Activated B cell treated with CpG ODN at 0.5 μM for 24 hours (primary cell): ENCODE measurements at regions of chr7 and their contacts with region 1.

Region 1: DNA sequence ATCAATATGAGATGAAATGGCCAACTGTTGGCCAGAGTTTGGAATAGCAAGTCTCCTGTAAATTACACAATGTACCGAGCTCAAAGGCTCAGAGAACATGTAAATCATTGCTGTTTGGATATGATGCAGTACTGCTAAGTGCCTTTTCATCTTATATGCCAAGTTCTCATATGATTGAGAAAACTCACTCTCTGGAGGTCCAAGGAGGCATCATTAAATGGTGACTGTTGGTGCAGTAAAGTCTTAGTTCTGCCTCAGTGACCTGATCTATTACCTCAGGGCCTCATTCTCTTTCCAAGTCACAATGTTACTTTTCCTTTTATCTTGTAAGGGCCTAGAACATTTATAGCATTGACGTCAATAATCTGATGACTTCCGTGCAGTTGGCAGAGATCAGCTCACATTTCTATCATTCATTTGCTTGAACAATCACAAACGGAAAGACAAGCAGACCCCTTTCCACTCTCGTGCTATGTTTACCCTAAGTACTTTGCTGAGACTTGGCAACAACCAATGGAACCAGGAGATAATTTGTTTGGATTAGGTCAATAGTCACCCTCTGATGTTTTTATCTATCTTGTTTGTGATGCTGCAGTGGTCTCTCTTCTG is 32.6 kb upstream of the PDK4 start:
- DNase-seq: no peak
- ATAC-seq: no peak
- H3K4me3 Mint-ChIP-seq: no peak overlapping the region
- H3K27ac Mint-ChIP-seq: no peak overlapping the region
- H3K4me1 Mint-ChIP-seq: no peaks in the 10 kb centered on the region
- H3K27me3 Mint-ChIP-seq: peaks cover 3% of the 10 kb centered on the region
- CTCF ChIP-seq: no peak

Region 2: DNA sequence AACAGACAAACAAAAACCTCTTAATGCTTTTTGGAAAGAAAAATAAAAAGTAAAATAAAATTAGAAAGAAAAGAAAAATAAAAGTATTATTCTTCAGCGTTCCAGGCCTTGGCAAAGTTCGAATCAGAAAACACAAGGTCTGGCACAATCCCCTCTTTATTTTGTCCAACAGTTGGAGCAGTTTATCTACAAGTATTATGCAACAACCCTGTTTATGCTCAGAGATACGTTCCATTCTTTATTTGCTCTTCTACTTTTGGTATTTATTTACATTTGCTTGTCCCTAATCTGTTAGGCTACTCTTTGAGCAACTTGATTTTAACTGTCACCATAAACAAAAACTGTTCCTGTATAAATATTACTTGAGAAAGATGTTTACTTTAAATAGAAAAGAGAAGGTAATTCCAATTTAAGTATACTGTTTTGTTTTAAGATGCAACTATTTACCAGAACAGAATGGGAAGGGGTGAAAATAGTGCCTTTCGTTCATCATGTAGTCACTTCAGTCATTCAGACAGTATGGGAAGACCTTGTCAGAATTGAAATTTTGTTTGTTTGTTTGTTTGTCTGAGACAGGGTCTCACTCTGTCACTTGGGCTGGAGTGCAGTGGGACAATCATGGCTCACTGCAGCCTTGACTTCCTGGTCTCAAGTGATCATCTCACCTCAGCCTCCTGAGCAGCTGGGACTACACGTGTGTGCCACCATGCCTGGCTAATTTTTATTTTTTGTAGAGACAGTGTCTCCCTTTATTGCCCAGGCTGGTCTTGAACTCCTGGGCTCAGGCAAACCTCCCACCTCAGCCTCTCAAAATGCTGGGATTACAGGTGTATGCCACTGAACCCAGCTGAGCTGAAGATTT is 38.3 kb before region 1 on chr7:
- CTCF ChIA-PET with region 1: no interaction called
- POLR2A ChIA-PET with region 1: no interaction called
- intact Hi-C with region 1: no loop called
- DNase-seq: no peak
- ATAC-seq: no peak
- H3K4me3 Mint-ChIP-seq: no peak overlapping the region
- H3K27ac Mint-ChIP-seq: no peak overlapping the region
- H3K4me1 Mint-ChIP-seq: peaks cover 22% of the 10 kb centered on the region
- H3K27me3 Mint-ChIP-seq: no peaks in the 10 kb centered on the region
- CTCF ChIP-seq: no peak

Region 3: DNA sequence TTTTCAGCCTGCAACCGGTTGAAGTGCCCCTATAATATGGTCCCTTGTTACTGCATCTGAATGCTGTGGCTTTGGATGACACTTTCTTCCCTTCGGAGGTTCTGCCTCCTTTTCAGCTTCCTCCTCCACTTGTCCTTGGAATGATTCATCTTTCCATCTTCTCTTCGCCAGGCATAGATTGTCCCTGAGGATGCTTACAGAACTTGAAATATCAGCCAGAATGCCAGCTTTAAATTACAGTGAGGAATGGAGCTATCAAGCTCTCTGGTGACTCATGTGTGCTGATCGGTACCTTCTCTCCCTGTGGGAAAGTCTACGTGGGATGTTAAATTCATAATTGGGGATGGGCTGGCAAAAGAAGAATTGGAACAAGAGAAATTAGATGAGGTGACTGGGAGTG is 13.2 kb after region 1 on chr7:
- CTCF ChIA-PET with region 1: no interaction called
- POLR2A ChIA-PET with region 1: no interaction called
- intact Hi-C with region 1: loop called (anchors 2 kb)
- DNase-seq: no peak
- ATAC-seq: no peak
- H3K4me3 Mint-ChIP-seq: no peak overlapping the region
- H3K27ac Mint-ChIP-seq: no peak overlapping the region
- H3K4me1 Mint-ChIP-seq: peaks cover 2% of the 10 kb centered on the region
- H3K27me3 Mint-ChIP-seq: peaks cover 2% of the 10 kb centered on the region
- CTCF ChIP-seq: no peak